IMR-90 (cell line): ENCODE measurements at regions of chr19 and their contacts with region 1.

Region 1: DNA sequence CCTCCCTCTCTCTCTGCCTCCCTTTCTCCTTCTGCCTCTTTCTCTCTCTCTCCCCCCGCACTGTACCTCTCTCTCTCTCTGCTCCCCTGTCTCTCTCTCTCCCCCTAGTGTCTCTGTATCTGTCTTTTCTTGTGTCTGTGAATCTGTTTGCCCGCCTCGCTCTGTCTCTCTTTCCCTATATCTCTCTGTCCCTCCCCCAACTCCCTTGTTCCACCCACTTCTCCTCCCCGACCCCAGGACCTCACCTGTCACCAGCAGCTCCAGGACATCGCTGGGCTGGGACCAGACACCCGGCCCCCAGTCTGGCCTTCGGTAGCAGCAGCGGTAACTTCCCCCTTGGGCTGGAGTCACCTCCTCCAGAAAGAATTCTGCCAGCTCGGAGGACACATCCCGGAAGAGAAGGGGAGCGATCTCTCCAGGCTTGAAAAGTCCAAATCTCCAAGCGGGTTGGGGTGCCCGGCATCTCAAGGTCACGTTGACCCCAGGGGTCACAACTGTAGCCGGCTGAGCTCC is 3.9 kb downstream of the OSCAR start:
- DNase-seq: peak; percentile 17
- ATAC-seq: peak; percentile 56
- H3K4me3 ChIP-seq: peak overlapping the region; percentile 38
- H3K27ac ChIP-seq: no peak overlapping the region
- H3K4me1 ChIP-seq: peaks cover 6% of the 10 kb centered on the region
- H3K27me3 ChIP-seq: peaks cover 3% of the 10 kb centered on the region; the same call in 1 of the 2 replicates
- CTCF ChIP-seq: peak; percentile 34
- POLR2A ChIP-seq: no peak
- RAD21 ChIP-seq: no peak; the same call in 1 of the 2 replicates

Region 2: GRCh38 chr19:53333463-53334449 is 762.9 kb before region 1 on chr19 and contains the start of gene ZNF845:
- CTCF ChIA-PET with region 1: no interaction called
- POLR2A ChIA-PET with region 1: no interaction called
- dilution Hi-C with region 1: no loop called
- in situ Hi-C with region 1: no loop called
- intact Hi-C with region 1: loop called (anchors 10 kb)
- DNase-seq: peak; percentile 89
- ATAC-seq: peak; percentile 100
- H3K4me3 ChIP-seq: peak within 1 kb of the TSS; percentile 69
- H3K27ac ChIP-seq: peak within 1 kb of the TSS; percentile 62
- H3K4me1 ChIP-seq: peaks cover 1% of the 10 kb centered on the region; the same call in 1 of the 2 replicates
- H3K27me3 ChIP-seq: no peaks in the 10 kb centered on the region
- CTCF ChIP-seq: no peak
- POLR2A ChIP-seq: peak; percentile 53; the same call in 1 of the 2 replicates
- RAD21 ChIP-seq: no peak
- total RNA-seq, gene ZNF845: 9.5 and 13.1 TPM in 2 replicates

Region 3: GRCh38 chr19:53808710-53809125 is 288.0 kb before region 1 on chr19:
- CTCF ChIA-PET with region 1: no interaction called
- POLR2A ChIA-PET with region 1: no interaction called
- dilution Hi-C with region 1: no loop called
- in situ Hi-C with region 1: no loop called
- intact Hi-C with region 1: loop called (anchors 5 kb)
- DNase-seq: peak; percentile 42
- ATAC-seq: peak; percentile 92
- H3K4me3 ChIP-seq: no peak overlapping the region
- H3K27ac ChIP-seq: no peak overlapping the region
- H3K4me1 ChIP-seq: no peaks in the 10 kb centered on the region
- H3K27me3 ChIP-seq: no peaks in the 10 kb centered on the region
- CTCF ChIP-seq: peak; percentile 67
- POLR2A ChIP-seq: no peak
- RAD21 ChIP-seq: peak; percentile 77